Mammary epithelial cell (primary cell): ENCODE measurements at regions of chr3 and their contacts with region 1.

Region 1: GRCh38 chr3:45210308-45211041 is 15.6 kb downstream of the TMEM158 start:
- DNase-seq: peak; percentile 71
- H3K4me3 ChIP-seq: no peak overlapping the region
- H3K27ac ChIP-seq: no peak overlapping the region
- H3K4me1 ChIP-seq: peaks cover 36% of the 10 kb centered on the region
- H3K27me3 ChIP-seq: no peaks in the 10 kb centered on the region
- CTCF ChIP-seq: peak; percentile 69 to 98

Region 2: GRCh38 chr3:45043728-45044299 is 166.7 kb before region 1 on chr3:
- CTCF ChIA-PET with region 1: interaction called, 14 read pairs
- dilution Hi-C with region 1: loop called (anchors 5 kb)
- in situ Hi-C with region 1: loop called in 1 of 2 experiments (anchors 5 kb)
- intact Hi-C with region 1: loop called (anchors 1 kb)
- DNase-seq: peak; percentile 68
- H3K4me3 ChIP-seq: no peak overlapping the region
- H3K27ac ChIP-seq: no peak overlapping the region
- H3K4me1 ChIP-seq: peaks cover 13% of the 10 kb centered on the region
- H3K27me3 ChIP-seq: no peaks in the 10 kb centered on the region
- CTCF ChIP-seq: peak in 1 of 2 donors; percentile 19

Region 3: GRCh38 chr3:45078910-45079522 is 131.5 kb before region 1 on chr3:
- CTCF ChIA-PET with region 1: no interaction called
- dilution Hi-C with region 1: no loop called
- in situ Hi-C with region 1: no loop called
- intact Hi-C with region 1: loop called (anchors 1 kb)
- DNase-seq: peak; percentile 35
- H3K4me3 ChIP-seq: no peak overlapping the region
- H3K27ac ChIP-seq: no peak overlapping the region
- H3K4me1 ChIP-seq: no peaks in the 10 kb centered on the region
- H3K27me3 ChIP-seq: no peaks in the 10 kb centered on the region
- CTCF ChIP-seq: peak in 1 of 2 donors; percentile 7

Region 4: DNA sequence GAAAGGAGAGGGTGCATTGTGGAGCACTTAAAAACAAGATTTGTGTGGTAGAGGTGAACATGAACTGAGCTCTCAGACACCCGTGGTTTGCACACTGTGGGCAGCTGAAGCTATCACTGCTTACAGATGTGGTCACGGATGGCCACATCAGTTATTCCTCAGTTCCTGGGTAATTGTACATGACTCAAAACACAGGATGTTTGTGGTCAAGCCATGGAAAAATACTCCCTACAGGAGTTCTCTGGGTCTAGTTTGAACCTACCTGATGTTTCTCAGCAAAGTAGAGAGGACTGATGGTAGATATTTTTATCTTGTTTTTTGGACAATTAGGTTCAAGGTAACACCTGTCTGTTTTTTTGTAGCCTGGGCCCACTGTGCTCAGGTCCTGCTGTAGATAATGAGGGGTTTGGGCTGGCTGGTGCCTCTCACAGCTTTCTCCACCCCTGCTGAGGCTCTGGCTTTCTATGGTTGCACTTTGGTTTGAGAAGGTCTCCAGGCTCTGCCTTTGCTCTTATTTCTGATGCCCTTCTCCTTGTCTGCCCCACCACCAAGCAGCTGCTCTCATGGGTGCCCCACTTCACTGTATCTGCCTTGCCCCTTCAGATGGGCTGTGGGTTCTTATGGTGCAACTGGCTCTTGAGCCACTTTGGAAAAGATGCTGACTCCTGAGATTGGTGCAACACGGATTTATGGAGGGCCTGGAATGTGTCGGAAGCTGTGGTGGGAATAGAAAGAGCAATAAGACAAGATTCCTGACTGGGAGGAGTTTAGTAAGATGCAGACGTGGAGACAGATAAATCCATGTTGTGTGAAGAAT is 104.4 kb before region 1 on chr3:
- CTCF ChIA-PET with region 1: interaction called, 14 read pairs
- dilution Hi-C with region 1: no loop called
- in situ Hi-C with region 1: no loop called
- intact Hi-C with region 1: no loop called
- DNase-seq: peak; percentile 90
- H3K4me3 ChIP-seq: no peak overlapping the region
- H3K27ac ChIP-seq: peak overlapping the region; percentile 55
- H3K4me1 ChIP-seq: peaks cover 30% of the 10 kb centered on the region
- H3K27me3 ChIP-seq: no peaks in the 10 kb centered on the region
- CTCF ChIP-seq: no peak

Region 5: DNA sequence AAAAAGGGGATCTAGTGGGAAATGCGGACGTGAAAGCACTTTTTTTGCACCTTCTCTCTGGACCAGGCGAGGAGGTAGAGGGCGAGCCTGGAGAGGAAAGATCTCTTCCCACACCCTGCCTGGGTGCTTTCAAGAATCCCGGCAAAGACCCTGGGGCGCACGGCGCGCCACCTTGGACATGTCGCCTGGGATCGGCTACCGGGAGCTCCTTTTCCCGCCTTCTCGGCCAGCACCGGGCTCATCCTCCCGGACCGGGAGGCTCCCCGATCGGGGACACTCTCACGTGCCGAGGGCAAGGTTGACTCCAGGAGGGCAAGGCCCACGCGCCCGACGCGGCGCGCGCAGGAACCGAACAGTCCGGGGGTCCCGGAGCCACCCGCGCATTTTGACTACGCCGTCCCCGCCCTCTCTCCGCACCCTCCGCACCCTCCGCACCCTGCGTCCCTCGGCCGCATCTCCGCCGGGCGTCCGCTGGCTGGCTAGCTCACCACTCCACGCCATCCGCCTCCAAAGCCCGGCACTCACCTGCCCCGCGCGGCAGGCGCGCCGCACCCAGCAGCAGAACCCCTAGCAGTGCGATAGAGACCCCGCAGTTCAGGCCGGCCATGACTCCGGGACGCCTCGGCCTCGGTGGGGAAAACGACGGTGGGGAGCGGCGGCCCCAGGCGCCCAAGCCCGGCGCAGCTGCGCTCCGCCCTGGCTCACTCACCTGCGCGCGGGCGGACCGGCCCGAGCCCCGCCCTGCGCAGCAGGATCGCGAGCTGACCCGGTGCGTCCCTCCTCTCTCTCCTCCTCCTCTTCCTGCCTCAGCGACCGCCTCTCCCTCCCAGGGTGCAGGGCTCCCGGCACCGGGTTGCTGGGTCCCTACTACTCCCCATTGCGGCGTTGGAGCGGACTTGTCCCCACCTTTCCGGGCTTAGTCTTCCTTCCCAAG is 64.5 kb before region 1 on chr3 and contains the start of gene CDCP1:
- CTCF ChIA-PET with region 1: no interaction called
- dilution Hi-C with region 1: no loop called
- in situ Hi-C with region 1: loop called in 1 of 2 experiments (anchors 5 kb)
- intact Hi-C with region 1: loop called (anchors 1 kb)
- DNase-seq: peak; percentile 74
- H3K4me3 ChIP-seq: peak within 1 kb of the TSS; percentile 68 to 98 (median 97)
- H3K27ac ChIP-seq: peak within 1 kb of the TSS; percentile 95
- H3K4me1 ChIP-seq: peaks cover 33% of the 10 kb centered on the region
- H3K27me3 ChIP-seq: no peaks in the 10 kb centered on the region
- CTCF ChIP-seq: no peak
- total RNA-seq, gene CDCP1: 126 to 271 TPM

Region 6: GRCh38 chr3:45167011-45167911 is 43.2 kb before region 1 on chr3:
- CTCF ChIA-PET with region 1: no interaction called
- dilution Hi-C with region 1: no loop called
- in situ Hi-C with region 1: no loop called
- intact Hi-C with region 1: loop called (anchors 1 kb)
- DNase-seq: peak; percentile 98
- H3K4me3 ChIP-seq: no peak overlapping the region
- H3K27ac ChIP-seq: peak overlapping the region; percentile 96
- H3K4me1 ChIP-seq: peaks cover 25% of the 10 kb centered on the region
- H3K27me3 ChIP-seq: no peaks in the 10 kb centered on the region
- CTCF ChIP-seq: no peak

Region 7: DNA sequence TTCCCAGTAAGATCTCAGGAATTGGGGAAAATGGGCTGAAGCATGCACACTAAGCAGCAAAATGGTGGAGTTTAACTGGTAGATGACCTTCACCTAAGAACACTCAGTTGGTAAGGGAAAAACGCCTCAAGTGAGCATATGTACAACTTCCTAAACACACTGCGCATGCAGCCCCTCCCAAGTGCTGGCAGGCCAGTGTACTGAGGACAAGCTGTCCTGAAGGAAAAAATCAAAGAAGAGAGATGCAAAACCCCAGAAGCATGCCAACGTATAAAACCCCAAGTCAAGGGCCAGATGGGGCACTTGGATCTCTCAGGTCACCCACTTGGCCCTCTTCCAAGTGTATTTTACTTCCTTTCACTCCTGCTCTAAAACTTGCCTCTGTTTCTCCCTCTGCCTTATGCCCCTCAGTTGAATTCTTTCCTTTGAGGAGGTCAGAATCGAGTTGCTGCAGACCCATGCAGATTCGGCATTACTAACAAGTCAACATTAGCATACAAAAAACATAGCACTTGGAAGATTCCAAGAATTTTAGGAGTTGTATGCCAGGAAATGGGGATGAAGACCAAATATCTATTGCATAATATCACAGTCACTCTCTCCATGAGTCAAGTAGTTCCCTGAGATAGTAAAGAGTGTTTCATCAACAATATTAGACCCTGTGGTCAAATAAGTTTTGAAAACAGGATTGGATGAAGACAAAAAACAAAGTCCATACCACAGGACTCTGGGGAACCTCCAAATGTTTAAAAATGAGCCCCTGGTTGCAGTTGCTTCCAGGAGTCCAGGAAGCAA is 796.0 kb after region 1 on chr3:
- CTCF ChIA-PET with region 1: no interaction called
- dilution Hi-C with region 1: no loop called
- in situ Hi-C with region 1: no loop called
- intact Hi-C with region 1: no loop called
- DNase-seq: peak; percentile 42
- H3K4me3 ChIP-seq: no peak overlapping the region
- H3K27ac ChIP-seq: no peak overlapping the region
- H3K4me1 ChIP-seq: no peaks in the 10 kb centered on the region
- H3K27me3 ChIP-seq: no peaks in the 10 kb centered on the region
- CTCF ChIP-seq: no peak